Ovary (tissue), 10 donors: ENCODE measurements at regions of chr1 and their contacts with region 1.

Region 1: GRCh38 chr1:178037503-178038253 is 56.2 kb upstream of the RASAL2 start:
- DNase-seq: peak; percentile 83 to 94 (median 91)
- H3K4me3 ChIP-seq: peak overlapping the region; percentile 80
- H3K27ac ChIP-seq: peak overlapping the region; percentile 41 to 46
- H3K4me1 ChIP-seq: peaks cover 1% of the 10 kb centered on the region
- H3K27me3 ChIP-seq: no peaks in the 10 kb centered on the region
- CTCF ChIP-seq: peak in 2 of 3 donors; percentile 53 to 58
- EP300 ChIP-seq: no peak
- POLR2A ChIP-seq: no peak

Region 2: DNA sequence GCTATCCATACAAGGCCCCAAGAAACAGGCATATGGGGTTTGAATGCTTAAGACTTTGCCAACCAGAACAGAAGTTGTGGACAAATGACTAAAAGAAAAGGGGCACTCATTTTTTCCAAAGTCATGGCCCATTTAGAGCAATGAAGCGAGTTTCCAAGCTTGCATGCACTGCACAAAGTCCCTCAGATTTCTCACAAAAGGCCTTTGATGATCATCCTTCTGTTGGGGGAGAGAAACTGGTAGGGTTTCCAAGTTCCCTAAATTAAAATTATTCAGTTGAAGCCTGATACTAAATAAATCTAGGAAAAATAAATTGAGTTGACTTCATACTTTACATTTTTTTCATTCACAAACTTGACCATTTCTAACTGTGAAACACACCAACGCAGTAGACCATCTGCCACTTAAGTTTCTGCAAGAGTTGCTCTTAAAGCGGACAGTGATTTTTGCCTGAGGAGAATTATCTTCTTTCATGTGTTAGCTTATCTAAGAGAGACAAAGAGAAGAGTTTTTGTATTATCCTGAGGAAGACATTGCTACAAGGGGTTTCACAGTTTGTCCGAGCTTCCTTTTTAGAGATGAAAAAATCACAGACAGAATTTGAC is 207.0 kb before region 1 on chr1:
- intact Hi-C with region 1: no loop called
- DNase-seq: no peak
- H3K4me3 ChIP-seq: no peak overlapping the region
- H3K27ac ChIP-seq: no peak overlapping the region
- H3K4me1 ChIP-seq: no peaks in the 10 kb centered on the region
- H3K27me3 ChIP-seq: no peaks in the 10 kb centered on the region
- CTCF ChIP-seq: no peak
- EP300 ChIP-seq: no peak
- POLR2A ChIP-seq: no peak

Region 3: DNA sequence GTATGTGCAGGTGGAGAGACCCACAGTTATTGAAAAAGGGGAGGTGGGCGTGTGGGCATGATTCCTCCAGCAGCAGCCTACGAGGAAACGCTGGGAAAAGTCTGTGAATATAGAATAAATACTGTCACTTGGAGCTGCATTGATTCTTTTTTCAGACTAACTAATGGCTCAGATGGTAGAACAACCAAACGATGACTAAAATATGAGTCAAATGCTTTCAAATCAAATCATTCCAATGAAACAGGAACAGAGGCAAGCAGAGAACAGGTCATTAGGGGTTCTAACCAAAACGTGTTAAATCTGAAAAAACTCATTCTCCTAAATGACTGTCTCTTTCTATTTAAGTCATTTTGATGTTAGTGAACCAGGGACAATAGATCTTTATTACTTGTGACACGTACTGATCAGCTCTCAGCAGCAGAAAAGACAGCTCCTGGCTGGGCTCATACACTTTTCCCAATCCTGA is 32.7 kb before region 1 on chr1:
- intact Hi-C with region 1: no loop called
- DNase-seq: no peak
- H3K4me3 ChIP-seq: no peak overlapping the region
- H3K27ac ChIP-seq: no peak overlapping the region
- H3K4me1 ChIP-seq: no peaks in the 10 kb centered on the region
- H3K27me3 ChIP-seq: no peaks in the 10 kb centered on the region
- CTCF ChIP-seq: no peak
- EP300 ChIP-seq: no peak
- POLR2A ChIP-seq: no peak

Region 4: DNA sequence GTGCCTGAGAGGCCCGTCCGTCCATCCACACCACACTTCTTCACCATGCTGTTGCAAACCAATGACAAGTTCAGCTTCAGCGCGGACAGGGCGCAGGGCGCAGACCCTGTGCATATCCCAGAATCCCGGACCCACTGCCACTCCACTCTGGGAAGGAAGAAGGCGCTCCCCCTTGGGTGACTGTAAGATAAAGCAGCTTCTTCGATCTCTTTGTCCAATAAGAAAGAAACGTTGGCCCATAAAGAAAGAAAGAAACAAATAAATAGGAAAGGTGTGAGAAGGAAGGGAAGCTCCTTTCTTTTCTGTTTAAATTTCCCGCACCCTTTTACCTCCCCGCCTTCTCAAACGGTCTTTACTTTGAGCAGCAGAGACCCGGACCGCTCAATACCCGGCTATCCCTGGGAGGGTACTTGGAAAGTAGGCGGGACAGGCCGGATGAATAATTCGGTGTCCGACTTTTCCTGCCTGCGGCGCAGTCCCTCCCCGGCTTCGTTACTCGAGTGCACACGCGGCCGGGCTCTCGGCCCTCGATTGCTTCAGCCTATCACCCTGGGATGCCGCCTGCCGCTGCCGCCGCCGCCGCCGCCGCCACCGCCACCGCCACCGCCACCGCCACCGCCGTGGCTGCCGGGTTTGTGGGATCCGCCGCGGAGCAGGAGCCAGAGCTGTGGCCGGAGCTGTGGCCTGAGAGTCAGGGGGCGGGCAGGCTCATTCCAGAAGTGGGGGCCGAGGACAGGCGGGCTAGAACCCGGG is 55.7 kb after region 1 on chr1:
- intact Hi-C with region 1: loop called in 2 of 4 experiments (anchors 5 kb)
- DNase-seq: peak; percentile 87 to 91 (median 89)
- H3K4me3 ChIP-seq: peak overlapping the region; percentile 80
- H3K27ac ChIP-seq: peak overlapping the region; percentile 50 to 87
- H3K4me1 ChIP-seq: peaks cover 2% of the 10 kb centered on the region
- H3K27me3 ChIP-seq: no peaks in the 10 kb centered on the region
- CTCF ChIP-seq: no peak
- EP300 ChIP-seq: no peak
- POLR2A ChIP-seq: no peak

Region 5: DNA sequence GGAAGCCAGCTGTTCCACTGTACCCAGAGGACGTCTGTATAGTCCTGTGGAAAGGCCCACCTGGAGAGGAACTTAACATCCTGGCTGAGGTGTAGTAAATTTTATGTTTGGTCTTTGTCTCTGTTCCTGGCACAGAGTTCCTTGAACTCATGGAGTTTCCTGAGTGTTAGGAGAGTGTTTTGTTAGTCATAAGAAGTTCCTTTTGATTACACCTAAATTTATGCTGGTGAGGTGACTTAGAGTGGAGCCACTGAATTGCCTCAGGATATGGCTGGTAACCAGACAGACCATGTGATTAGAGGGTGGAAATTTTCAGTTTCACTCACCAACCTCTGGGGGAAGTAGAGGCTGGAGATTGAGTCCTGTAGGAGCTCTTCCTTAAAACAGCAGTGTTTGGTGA is 114.2 kb after region 1 on chr1:
- intact Hi-C with region 1: no loop called
- DNase-seq: no peak
- H3K4me3 ChIP-seq: no peak overlapping the region
- H3K27ac ChIP-seq: no peak overlapping the region
- H3K4me1 ChIP-seq: no peaks in the 10 kb centered on the region
- H3K27me3 ChIP-seq: no peaks in the 10 kb centered on the region
- CTCF ChIP-seq: no peak
- EP300 ChIP-seq: no peak
- POLR2A ChIP-seq: no peak